ENCODE measurements at regions of chr11 and their contacts with region 1.

Region 1: GRCh38 chr11:111557425-111558111 is 17.0 kb downstream of the LAYN start:
- DNase-seq: peak; percentile 99
- H3K4me3 ChIP-seq: no peak overlapping the region
- CTCF ChIP-seq: peak; percentile 9

Region 2: GRCh38 chr11:111541254-111542061 is 16.1 kb before region 1 on chr11:
- CTCF ChIA-PET with region 1: interaction called, 13 read pairs
- POLR2A ChIA-PET with region 1: interaction called, 7 read pairs
- DNase-seq: peak; percentile 77
- H3K4me3 ChIP-seq: peak overlapping the region; percentile 82
- CTCF ChIP-seq: no peak